Left cardiac atrium (tissue), 4 donors: ENCODE measurements at regions of chr9 and their contacts with region 1.

Region 1: DNA sequence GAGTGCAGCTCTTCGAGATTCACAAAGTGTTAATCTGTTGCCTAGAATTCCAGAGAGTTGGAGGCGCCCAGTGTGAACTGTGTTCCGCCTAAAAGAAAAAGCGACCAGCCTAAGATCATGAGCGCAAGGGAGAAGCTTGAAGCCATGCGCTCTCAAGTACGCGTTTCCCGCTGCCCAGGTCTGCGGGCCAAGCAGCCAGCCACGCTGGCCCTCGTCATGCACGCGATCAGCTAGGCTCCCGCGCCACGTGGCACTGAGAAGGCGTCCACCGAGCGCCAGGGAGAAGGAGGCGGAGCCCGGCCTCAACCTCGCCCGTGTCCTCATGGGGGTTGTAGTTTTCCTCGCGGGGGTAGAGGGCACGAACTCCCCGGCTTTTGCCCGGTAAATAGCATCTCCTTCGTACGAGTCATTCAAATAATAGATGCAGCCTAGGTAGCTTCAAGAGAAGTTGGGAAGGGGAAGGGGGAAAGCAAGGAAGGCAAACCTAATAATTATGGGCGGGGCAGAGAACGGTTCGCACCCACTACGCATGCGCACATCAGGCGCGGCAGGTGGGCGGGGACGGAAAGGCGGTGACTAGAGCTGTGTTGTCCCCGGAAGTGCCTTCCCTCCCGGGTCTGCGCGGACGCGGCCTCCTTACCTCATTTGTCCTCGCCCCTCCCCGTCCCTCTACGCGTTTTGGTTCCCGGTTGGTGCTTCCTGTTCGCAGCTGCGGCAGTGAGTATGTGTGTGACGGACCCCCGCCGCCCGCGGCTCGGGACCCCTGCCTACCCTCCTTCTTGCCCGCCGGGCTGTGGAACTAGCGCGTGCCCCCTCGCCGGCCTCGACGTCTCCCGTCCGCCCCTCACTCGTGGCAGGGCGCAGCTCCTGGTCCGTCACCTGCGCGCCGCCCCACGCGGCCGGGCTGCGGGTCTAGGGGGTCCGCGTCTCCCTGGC is at the start of gene ZCCHC7:
- DNase-seq: peak; percentile 96
- ATAC-seq: peak; percentile 99 to 100
- total RNA-seq, gene ZCCHC7: 10.3 to 13.6 TPM

Region 2: DNA sequence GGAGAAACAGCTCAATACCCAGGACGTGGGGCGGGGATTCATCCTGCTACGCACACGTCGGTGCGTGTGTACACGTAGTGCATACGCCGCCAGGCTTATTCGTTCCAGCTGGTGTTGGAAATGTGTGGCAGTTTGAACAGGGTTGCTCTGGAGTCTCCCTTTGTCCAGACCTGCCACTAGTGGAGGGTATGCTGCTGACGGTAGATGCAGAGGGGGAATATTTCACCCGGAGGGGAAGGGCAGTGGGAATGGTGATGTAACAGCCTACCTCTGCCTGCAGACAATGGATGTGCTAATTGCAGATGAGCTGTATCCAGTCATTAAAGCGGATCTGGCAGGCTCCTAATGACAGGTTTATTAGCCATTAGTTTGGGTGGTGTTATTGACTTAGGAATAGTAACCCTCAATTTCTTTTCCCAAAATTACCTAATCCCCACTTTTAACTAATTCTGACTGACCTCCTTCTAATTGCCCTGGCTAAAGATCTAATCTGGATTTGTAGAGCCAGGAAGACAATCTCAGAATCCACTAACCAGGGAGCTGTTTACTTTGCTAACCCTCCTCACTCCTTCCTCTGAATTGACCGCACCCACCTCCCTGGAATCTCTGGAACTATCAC is 228.7 kb before region 1 on chr9:
- intact Hi-C with region 1: no loop called
- DNase-seq: no peak
- ATAC-seq: no peak

Region 3: DNA sequence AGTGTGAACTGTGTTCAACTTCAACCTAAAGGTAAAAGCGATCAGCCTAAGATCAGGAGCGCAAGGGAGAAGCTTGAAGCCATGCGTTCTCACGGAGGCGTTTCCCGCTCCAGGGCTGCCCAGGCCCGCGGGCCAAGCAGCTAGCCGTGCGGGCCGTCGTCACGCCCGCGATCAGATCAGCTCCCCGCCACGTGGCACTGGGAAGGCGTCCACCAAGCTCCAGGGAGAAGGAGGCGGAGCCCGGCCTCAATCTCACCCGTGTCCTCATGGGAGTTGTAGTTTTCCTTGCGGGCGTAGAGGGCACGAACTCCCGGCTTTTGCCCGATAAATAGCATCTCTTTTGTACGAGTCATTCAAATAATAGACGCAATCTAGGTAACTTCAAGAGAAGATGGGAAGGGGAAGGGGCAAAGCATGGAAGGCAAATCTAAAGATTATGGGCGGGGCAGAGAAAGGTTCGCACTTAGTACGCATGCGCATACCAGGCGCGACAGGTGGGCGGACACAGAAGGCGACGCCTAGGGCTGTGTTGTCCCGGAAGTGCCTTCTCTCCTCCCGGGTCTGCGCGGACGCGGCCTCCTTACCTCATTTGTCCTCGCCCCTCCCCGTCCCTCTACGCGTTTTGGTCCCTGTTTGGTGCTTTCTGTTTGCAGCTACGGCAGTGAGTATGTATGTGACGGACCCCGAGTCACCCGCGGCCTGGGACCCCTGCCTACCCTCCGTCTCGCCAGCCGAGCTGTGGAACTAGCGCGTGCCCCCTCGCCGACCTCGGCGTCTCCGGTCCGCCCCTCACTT is 40.6 kb before region 1 on chr9:
- intact Hi-C with region 1: loop called in 1 of 2 experiments (anchors 2 kb)
- DNase-seq: peak; percentile 94
- ATAC-seq: peak; percentile 99

Region 4: GRCh38 chr9:37511016-37512010 is 391.1 kb after region 1 on chr9:
- intact Hi-C with region 1: no loop called
- DNase-seq: no peak
- ATAC-seq: peak in 1 of 2 donors; percentile 34